Pancreas (tissue), 10 donors: ENCODE measurements at regions of chr5 and their contacts with region 1.

Region 1: GRCh38 chr5:134527146-134527960 is 1.9 kb downstream of the JADE2 start:
- DNase-seq: peak; percentile 72 to 92 (median 84)
- ATAC-seq: peak; percentile 52 to 73 (median 63)
- H3K4me3 ChIP-seq: peak overlapping the region; percentile 73 to 93 (median 82)
- H3K27ac ChIP-seq: peak overlapping the region; percentile 97 to 99 (median 98)
- H3K4me1 ChIP-seq: peaks cover 33 to 60% (median 51%) of the 10 kb centered on the region in 3 donors
- H3K27me3 ChIP-seq: no peaks in the 10 kb centered on the region
- CTCF ChIP-seq: peak; percentile 59 to 81 (median 78)

Region 2: GRCh38 chr5:134225618-134226440 is 301.5 kb before region 1 on chr5 and contains the start of gene PPP2CA:
- intact Hi-C with region 1: no loop called
- DNase-seq: peak; percentile 97 to 100 (median 100)
- ATAC-seq: peak; percentile 90 to 96 (median 92)
- H3K4me3 ChIP-seq: peak within 1 kb of the TSS; percentile 87 to 100 (median 96)
- H3K27ac ChIP-seq: peak within 1 kb of the TSS; percentile 98 to 99 (median 98)
- H3K4me1 ChIP-seq: peaks cover 10 to 38% (median 11%) of the 10 kb centered on the region in 3 donors
- H3K27me3 ChIP-seq: no peaks in the 10 kb centered on the region
- CTCF ChIP-seq: no peak
- total RNA-seq, gene PPP2CA: 34.3 to 59.2 (median 53.0) TPM

Region 3: GRCh38 chr5:134411546-134412266 is 115.6 kb before region 1 on chr5 and contains the start of gene CDKN2AIPNL:
- intact Hi-C with region 1: loop called in 2 of 3 experiments (anchors 5 kb)
- DNase-seq: peak; percentile 89 to 97 (median 92)
- ATAC-seq: peak; percentile 92 to 98 (median 93)
- H3K4me3 ChIP-seq: peak within 1 kb of the TSS; percentile 58 to 90 (median 66)
- H3K27ac ChIP-seq: peak within 1 kb of the TSS; percentile 54 to 93 (median 78)
- H3K4me1 ChIP-seq: peaks cover 27 to 42% (median 37%) of the 10 kb centered on the region in 3 donors
- H3K27me3 ChIP-seq: no peaks in the 10 kb centered on the region
- CTCF ChIP-seq: peak; percentile 34 to 78 (median 58)
- total RNA-seq, gene CDKN2AIPNL: 11.9 to 24.6 (median 15.8) TPM